ENCODE measurements at regions of chr13 and their contacts with region 1.

Region 1: GRCh38 chr13:46961719-46962118 is 64.9 kb upstream of the HTR2A start:
- DNase-seq: no peak
- ATAC-seq: no peak
- H3K4me3 ChIP-seq: no peak overlapping the region
- H3K27ac ChIP-seq: no peak overlapping the region
- H3K4me1 ChIP-seq: no peaks in the 10 kb centered on the region
- H3K27me3 ChIP-seq: peaks cover 16% of the 10 kb centered on the region
- CTCF ChIP-seq: no peak
- POLR2A ChIP-seq: no peak
- RAD21 ChIP-seq: no peak

Region 2: DNA sequence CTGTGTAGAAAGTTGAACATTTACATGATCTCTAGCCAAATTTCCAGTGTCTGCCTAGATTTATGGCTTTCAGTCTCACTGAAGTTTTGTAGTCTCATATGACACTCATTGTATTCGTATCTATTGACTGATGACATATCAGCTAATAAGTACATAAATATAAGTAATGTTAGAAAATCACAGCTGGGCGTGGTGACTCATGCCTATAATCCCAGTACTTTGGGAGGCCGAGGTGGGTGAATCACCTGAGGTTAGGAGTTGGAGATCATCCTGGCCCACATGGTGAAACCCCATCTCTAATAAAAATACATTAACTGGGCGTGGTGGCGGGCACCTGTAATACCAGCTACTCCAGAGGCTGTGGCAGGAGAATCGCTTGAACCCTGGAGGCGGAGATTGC is 10.2 kb before region 1 on chr13:
- CTCF ChIA-PET with region 1: interaction called, 16 read pairs
- POLR2A ChIA-PET with region 1: no interaction called
- RAD21 ChIA-PET with region 1: no interaction called
- intact Hi-C with region 1: no loop called
- DNase-seq: peak; percentile 27
- ATAC-seq: peak; percentile 76
- H3K4me3 ChIP-seq: no peak overlapping the region
- H3K27ac ChIP-seq: no peak overlapping the region
- H3K4me1 ChIP-seq: peaks cover 0 to 5% of the 10 kb centered on the region in 2 experiments; a peak in 1 of 4 replicates
- H3K27me3 ChIP-seq: peaks cover 33% of the 10 kb centered on the region
- CTCF ChIP-seq: no peak
- POLR2A ChIP-seq: no peak
- RAD21 ChIP-seq: no peak

Region 3: GRCh38 chr13:46975173-46975572 is 13.5 kb after region 1 on chr13:
- CTCF ChIA-PET with region 1: interaction called, 40 read pairs
- POLR2A ChIA-PET with region 1: interaction called, 3 read pairs
- RAD21 ChIA-PET with region 1: no interaction called
- intact Hi-C with region 1: no loop called
- DNase-seq: no peak
- ATAC-seq: no peak
- H3K4me3 ChIP-seq: no peak overlapping the region
- H3K27ac ChIP-seq: no peak overlapping the region
- H3K4me1 ChIP-seq: no peaks in the 10 kb centered on the region
- H3K27me3 ChIP-seq: no peaks in the 10 kb centered on the region
- CTCF ChIP-seq: no peak
- POLR2A ChIP-seq: no peak
- RAD21 ChIP-seq: no peak

Region 4: DNA sequence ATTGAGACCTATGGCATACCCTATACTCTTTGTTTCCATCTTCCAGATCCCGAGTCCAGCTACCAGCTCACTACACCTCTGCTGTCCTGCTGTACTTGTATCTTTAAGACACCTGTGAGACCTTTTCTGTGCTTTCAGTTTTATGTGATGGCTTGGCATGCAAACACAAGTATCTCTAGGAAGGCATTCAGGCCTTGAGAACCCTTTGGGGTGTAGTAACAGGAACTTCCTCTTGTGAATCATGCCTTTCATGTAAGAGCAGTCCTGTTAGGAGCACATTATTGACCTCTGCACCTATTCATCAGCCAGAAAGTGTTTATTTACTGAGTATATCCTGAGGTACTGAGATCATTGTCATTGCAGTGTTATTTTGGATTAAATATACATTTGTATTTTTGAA is 22.2 kb after region 1 on chr13:
- CTCF ChIA-PET with region 1: interaction called, 10 read pairs
- POLR2A ChIA-PET with region 1: no interaction called
- RAD21 ChIA-PET with region 1: no interaction called
- intact Hi-C with region 1: no loop called
- DNase-seq: no peak
- ATAC-seq: no peak
- H3K4me3 ChIP-seq: no peak overlapping the region
- H3K27ac ChIP-seq: no peak overlapping the region
- H3K4me1 ChIP-seq: no peaks in the 10 kb centered on the region
- H3K27me3 ChIP-seq: 0 out of 2 replicates have a peak, but pooled peaks cover 9% of the 10 kb centered on the region
- CTCF ChIP-seq: no peak
- POLR2A ChIP-seq: no peak
- RAD21 ChIP-seq: no peak